Activated naive CD4-positive, alpha-beta T cell treated with anti-CD3 and anti-CD28 coated beads for 36 hours (primary cell): ENCODE measurements at regions of chr5 and their contacts with region 1.

Region 1: DNA sequence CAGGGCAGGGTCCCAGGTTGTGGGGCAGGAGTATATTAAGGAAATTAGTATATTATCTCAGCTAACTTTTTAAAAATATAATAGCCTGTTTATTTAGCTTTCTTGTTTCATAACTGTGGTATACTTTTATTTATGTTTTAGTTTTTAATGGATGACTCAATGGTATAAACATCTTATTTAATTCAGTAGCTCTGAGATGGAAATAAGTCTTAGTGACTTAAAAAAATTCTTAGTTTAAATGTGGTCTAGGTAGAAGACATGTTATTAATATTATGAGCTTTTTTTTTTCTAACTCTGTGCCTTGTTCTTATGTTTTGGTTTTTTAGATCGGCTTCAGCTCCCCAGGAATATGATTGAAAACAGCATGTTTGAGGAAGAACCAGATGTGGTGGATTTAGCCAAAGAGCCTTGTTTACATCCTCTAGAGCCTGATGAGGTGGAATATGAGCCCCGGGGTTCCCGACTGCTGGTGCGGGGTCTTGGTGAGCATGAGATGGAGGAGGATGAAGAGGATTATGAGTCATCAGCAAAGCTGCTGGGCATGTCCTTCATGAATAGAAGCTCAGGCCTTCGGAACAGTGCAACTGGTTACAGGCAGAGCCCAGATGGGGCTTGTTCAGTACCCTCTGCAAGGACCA is 43.1 kb downstream of the LNPEP start:
- DNase-seq: no peak
- H3K4me3 Mint-ChIP-seq: no peak overlapping the region
- H3K27ac Mint-ChIP-seq: no peak overlapping the region
- H3K4me1 Mint-ChIP-seq: peaks cover 41% of the 10 kb centered on the region
- H3K27me3 Mint-ChIP-seq: no peaks in the 10 kb centered on the region

Region 2: GRCh38 chr5:96781031-96781937 is 197.6 kb before region 1 on chr5:
- CTCF ChIA-PET with region 1: no interaction called
- intact Hi-C with region 1: no loop called
- DNase-seq: no peak
- H3K4me3 Mint-ChIP-seq: no peak overlapping the region
- H3K27ac Mint-ChIP-seq: peak overlapping the region; percentile 57
- H3K4me1 Mint-ChIP-seq: peaks cover 4% of the 10 kb centered on the region
- H3K27me3 Mint-ChIP-seq: no peaks in the 10 kb centered on the region

Region 3: GRCh38 chr5:96957254-96958049 is 21.5 kb before region 1 on chr5:
- CTCF ChIA-PET with region 1: interaction called, 7 read pairs
- intact Hi-C with region 1: loop called (anchors 1 kb)
- DNase-seq: peak; percentile 73
- H3K4me3 Mint-ChIP-seq: peak overlapping the region; percentile 64
- H3K27ac Mint-ChIP-seq: peak overlapping the region; percentile 86
- H3K4me1 Mint-ChIP-seq: peaks cover 77% of the 10 kb centered on the region
- H3K27me3 Mint-ChIP-seq: no peaks in the 10 kb centered on the region

Region 4: GRCh38 chr5:96997265-96997859 is 18.4 kb after region 1 on chr5:
- CTCF ChIA-PET with region 1: interaction called, 11 read pairs
- intact Hi-C with region 1: no loop called
- DNase-seq: peak; percentile 33
- H3K4me3 Mint-ChIP-seq: no peak overlapping the region
- H3K27ac Mint-ChIP-seq: no peak overlapping the region
- H3K4me1 Mint-ChIP-seq: peaks cover 23% of the 10 kb centered on the region
- H3K27me3 Mint-ChIP-seq: no peaks in the 10 kb centered on the region